ENCODE measurements at regions of chr19 and their contacts with region 1.

Region 1: GRCh38 chr19:56121180-56122167 is at the start of gene ZNF787:
- DNase-seq: peak; percentile 95 to 98
- ATAC-seq: peak; percentile 81 to 91 (median 83)
- H3K4me3 ChIP-seq: peak within 1 kb of the TSS; percentile 59
- H3K4me3 Mint-ChIP-seq: peak within 1 kb of the TSS; percentile 97
- H3K27ac ChIP-seq: peak within 1 kb of the TSS; percentile 95
- H3K27ac Mint-ChIP-seq: peak within 1 kb of the TSS; percentile 92 to 98
- H3K4me1 ChIP-seq: peaks cover 31% of the 10 kb centered on the region
- H3K4me1 Mint-ChIP-seq: peaks cover 21 to 37% of the 10 kb centered on the region in 2 donors
- H3K27me3 ChIP-seq: no peaks in the 10 kb centered on the region
- H3K27me3 Mint-ChIP-seq: no peaks in the 10 kb centered on the region
- CTCF ChIP-seq: no peak
- total RNA-seq, gene ZNF787: 23.9 to 42.0 (median 36.9) TPM

Region 2: DNA sequence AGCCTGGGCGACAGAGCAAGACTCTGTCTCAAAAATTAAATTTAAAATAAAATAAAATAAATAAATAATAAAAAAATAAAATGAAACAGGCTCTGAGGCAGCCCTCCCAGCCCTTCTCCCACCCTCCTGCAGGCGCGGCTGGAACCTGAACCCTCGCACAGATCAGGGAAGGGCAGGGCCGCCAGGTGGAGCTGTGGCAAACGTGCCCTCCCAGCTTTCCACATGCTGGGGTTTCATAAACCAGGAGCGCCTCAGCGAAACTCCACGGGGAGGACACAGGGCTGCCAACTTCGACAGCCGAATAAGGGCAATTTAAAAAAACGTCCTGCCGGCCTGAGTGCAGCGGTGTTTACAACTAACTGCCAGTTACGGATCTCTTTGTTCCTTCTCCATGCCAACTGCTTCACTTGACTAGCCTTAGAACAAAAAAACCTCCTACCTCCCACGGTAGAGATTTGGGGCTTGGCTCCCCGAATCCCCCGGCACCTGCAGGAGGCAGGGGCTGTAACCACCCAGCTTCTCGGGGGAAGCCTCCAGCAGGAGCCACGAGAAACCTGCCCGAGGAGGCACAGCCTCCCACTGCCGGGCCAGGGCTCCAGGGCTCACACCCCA is 16.3 kb before region 1 on chr19:
- intact Hi-C with region 1: no loop called
- DNase-seq: peak; percentile 40 to 74
- ATAC-seq: peak; percentile 70 to 86 (median 82)
- H3K4me3 ChIP-seq: no peak overlapping the region
- H3K4me3 Mint-ChIP-seq: peak overlapping the region; percentile 6
- H3K27ac ChIP-seq: no peak overlapping the region
- H3K27ac Mint-ChIP-seq: peak overlapping the region; percentile 53 to 75
- H3K4me1 ChIP-seq: peaks cover 45% of the 10 kb centered on the region
- H3K4me1 Mint-ChIP-seq: peaks cover 21 to 51% of the 10 kb centered on the region in 2 donors
- H3K27me3 ChIP-seq: no peaks in the 10 kb centered on the region
- H3K27me3 Mint-ChIP-seq: no peaks in the 10 kb centered on the region
- CTCF ChIP-seq: peak; percentile 68

Region 3: DNA sequence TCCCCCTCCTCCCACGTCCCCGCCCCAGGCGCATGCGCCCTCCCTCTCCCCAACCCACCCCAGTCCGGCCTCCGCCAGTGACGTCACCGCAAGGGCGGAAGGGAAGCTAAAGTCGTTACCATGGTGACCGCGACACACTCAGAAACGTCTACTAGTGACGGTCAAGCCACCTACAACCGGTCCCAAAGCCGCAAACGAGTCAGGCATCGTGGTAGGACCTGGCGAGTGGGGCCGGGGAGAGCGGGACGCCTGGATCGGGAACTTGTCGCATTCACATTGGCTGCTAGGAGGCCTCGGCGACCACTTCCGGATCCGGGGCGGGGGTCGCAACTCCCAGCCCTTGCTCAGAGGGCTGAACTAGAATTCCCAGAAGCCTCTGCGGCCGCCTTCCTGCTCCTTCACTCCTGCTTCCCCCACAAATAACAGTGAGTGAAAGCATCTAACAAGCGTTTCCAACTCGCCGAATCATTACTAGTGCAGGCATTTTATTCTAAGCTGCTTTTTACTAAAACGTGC is 193.1 kb after region 1 on chr19 and contains the start of gene ZSCAN5A:
- intact Hi-C with region 1: loop called (anchors 1 kb)
- DNase-seq: peak; percentile 94 to 98
- ATAC-seq: peak; percentile 77 to 89 (median 83)
- H3K4me3 ChIP-seq: peak within 1 kb of the TSS; percentile 77
- H3K4me3 Mint-ChIP-seq: peak within 1 kb of the TSS; percentile 98
- H3K27ac ChIP-seq: peak within 1 kb of the TSS; percentile 94
- H3K27ac Mint-ChIP-seq: peak within 1 kb of the TSS; percentile 97 to 98
- H3K4me1 ChIP-seq: peaks cover 13% of the 10 kb centered on the region
- H3K4me1 Mint-ChIP-seq: peaks cover 21 to 38% of the 10 kb centered on the region in 2 donors
- H3K27me3 ChIP-seq: no peaks in the 10 kb centered on the region
- H3K27me3 Mint-ChIP-seq: peaks cover 0 to under 1% of the 10 kb centered on the region in 2 donors
- CTCF ChIP-seq: no peak
- total RNA-seq, gene ZSCAN5A: 6.7 to 10.2 (median 7.9) TPM